Heart left ventricle (tissue), 16 donors: ENCODE measurements at regions of chr17 and their contacts with region 1.

Region 1: DNA sequence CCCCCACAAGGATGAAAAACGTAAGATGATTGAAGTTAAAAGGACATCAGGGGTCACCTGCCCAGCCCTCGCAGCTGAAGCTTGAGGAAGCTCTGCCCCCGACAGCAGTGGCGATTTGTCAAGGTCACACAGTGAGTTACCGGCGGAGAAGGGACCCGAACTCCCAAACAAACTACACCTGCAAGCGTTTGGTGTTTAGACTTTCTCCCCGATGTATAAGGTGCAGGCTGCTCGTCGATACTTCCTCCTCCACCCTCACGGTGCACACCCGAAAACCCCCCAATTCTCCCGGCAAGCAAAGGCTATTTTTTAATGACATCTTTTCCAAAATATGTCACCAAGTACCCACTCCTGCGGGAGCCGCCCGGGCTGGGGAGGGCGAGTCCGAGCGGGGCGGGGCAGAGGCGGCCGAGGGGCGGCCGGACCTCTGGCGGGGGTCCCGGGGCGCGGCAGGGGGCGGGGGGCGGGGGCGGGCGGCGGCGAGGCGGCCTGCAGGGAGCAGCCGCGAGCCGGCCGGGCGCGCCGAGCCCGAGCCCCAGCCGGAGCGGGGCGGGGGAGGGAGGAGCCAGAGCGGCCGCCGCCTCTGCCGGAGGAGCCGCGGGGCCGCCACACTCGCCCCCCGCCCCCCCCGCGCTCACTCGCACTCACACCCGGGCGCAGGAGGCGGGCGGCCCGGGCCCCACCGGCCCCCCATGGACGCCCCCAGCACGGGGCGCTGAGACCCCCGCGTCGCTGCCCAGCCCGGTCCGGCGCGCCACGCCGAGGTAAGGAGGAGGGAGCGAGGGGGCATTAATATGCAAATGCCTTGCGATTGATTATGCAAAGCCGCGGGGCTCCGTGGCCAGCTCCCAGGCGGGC is at the start of gene THRA:
- DNase-seq: peak; percentile 74 to 89 (median 86)
- ATAC-seq: peak; percentile 19 to 82 (median 74)
- H3K4me3 ChIP-seq: peak within 1 kb of the TSS; percentile 78 to 100 (median 96)
- H3K27ac ChIP-seq: peak within 1 kb of the TSS; percentile 95 to 100 (median 98)
- H3K4me1 ChIP-seq: peaks cover 3 to 61% (median 48%) of the 10 kb centered on the region in 12 donors
- H3K27me3 ChIP-seq: no peaks in the 10 kb centered on the region
- CTCF ChIP-seq: peak in 3 of 12 donors; percentile 17 to 30 (median 30)
- POLR2A ChIP-seq: no peak
- total RNA-seq, gene THRA: 63.2 to 105 (median 73.2) TPM

Region 2: GRCh38 chr17:39999067-39999466 is 63.5 kb before region 1 on chr17:
- intact Hi-C with region 1: no loop called
- DNase-seq: no peak
- ATAC-seq: no peak
- H3K4me3 ChIP-seq: no peak overlapping the region
- H3K27ac ChIP-seq: no peak overlapping the region
- H3K4me1 ChIP-seq: peaks cover 0 to 11% (median 0%) of the 10 kb centered on the region in 12 donors
- H3K27me3 ChIP-seq: no peaks in the 10 kb centered on the region
- CTCF ChIP-seq: no peak
- POLR2A ChIP-seq: no peak

Region 3: DNA sequence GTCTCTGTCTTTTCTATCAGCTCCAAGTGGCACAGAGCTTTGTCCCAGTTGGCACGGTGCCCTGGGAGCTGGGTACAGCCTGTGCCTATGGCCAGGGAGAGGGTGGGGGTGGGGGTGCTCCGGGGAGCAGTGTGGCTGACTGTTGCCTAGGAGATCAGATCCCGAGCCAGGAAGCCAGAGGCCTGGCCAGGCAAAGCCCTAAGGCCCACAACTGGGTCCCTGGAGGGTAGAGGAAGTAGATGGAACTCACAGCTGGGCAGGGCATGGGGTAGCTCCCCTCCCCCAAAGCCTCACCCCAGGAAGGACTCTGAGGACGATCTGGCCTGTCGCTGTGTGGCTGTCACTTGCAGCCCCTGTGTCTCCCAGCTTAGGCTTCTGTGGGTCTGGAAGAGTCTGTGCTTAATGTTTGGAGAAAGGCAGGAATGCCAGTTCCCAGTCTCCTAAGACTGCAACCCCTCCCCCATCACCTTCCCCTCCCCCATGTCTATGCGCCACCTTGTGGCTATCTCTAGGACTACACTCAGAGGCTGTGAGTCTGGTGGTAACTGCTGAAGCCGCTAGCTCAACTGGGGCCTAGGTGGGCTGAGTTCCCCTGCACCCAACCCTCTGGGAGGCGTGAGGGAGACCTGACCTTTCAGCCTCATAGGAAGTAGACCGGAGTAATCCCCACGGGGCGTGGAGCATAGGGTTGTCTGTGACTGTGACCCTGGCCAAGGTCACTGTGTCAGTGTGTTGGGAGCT is 12.8 kb after region 1 on chr17:
- intact Hi-C with region 1: loop called in 1 of 10 experiments (anchors 2 kb)
- DNase-seq: peak; percentile 78 to 94 (median 90)
- ATAC-seq: peak; percentile 66 to 72 (median 68)
- H3K4me3 ChIP-seq: peak overlapping the region in 8 of 12 donors; percentile 2 to 27 (median 18)
- H3K27ac ChIP-seq: peak overlapping the region; percentile 62 to 100 (median 95)
- H3K4me1 ChIP-seq: peaks cover 31 to 77% (median 68%) of the 10 kb centered on the region in 12 donors
- H3K27me3 ChIP-seq: no peaks in the 10 kb centered on the region
- CTCF ChIP-seq: peak; percentile 76 to 90 (median 84)
- POLR2A ChIP-seq: no peak

Region 4: DNA sequence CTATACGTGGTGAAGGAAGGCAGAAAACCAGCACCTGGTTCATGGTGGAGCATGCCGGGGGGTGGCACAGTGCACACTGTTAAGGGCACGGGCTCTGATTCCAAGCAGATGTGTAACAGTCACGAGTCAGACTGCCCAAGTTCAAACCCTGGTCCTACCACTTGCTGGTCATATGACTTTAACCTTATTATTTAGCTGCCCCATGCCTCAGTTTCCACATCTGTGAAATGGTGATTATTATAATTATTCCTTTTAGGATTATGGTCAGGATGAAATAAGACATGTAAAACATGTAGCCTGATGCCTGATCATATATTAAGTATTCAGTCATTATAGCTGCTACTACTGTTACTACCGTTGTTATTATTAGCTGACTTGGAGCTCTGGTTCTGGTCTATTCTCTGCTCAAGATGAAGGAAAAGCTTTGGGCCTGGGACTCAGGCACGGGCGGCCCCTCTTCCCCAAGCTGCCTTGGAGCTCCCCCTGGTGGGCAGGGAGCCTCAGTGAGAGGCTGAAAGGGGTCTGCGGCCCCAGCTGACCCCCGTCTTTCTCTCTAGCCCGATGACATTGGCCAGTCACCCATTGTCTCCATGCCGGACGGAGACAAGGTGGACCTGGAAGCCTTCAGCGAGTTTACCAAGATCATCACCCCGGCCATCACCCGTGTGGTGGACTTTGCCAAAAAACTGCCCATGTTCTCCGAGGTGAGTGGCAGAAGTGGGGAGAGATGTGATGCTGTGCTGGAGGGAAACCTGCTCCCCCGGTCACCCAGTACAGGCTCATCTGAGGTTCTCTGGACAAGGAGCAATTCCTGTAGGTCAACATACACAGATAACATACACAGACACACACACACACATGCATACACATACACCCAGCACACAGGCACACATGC is 23.8 kb after region 1 on chr17:
- intact Hi-C with region 1: loop called in 2 of 10 experiments (anchors 2 kb)
- DNase-seq: peak in 4 of 5 donors; percentile 59 to 82 (median 69)
- ATAC-seq: peak in 3 of 4 donors; percentile 7 to 38 (median 35)
- H3K4me3 ChIP-seq: no peak overlapping the region
- H3K27ac ChIP-seq: peak overlapping the region in 4 of 12 donors; percentile 4 to 66 (median 23)
- H3K4me1 ChIP-seq: peaks cover 0 to 31% (median 16%) of the 10 kb centered on the region in 12 donors
- H3K27me3 ChIP-seq: no peaks in the 10 kb centered on the region
- CTCF ChIP-seq: peak; percentile 75 to 91 (median 86)
- POLR2A ChIP-seq: no peak

Region 5: GRCh38 chr17:40098846-40099618 is 36.5 kb after region 1 on chr17:
- intact Hi-C with region 1: loop called in 1 of 10 experiments (anchors 5 kb)
- DNase-seq: peak; percentile 100
- ATAC-seq: peak; percentile 75 to 87 (median 82)
- H3K4me3 ChIP-seq: peak overlapping the region; percentile 72 to 100 (median 84)
- H3K27ac ChIP-seq: peak overlapping the region; percentile 93 to 100 (median 98)
- H3K4me1 ChIP-seq: peaks cover 20 to 93% (median 79%) of the 10 kb centered on the region in 12 donors
- H3K27me3 ChIP-seq: no peaks in the 10 kb centered on the region
- CTCF ChIP-seq: no peak
- POLR2A ChIP-seq: peak; percentile 64 to 89

Region 6: GRCh38 chr17:40224718-40225550 is 162.4 kb after region 1 on chr17:
- intact Hi-C with region 1: no loop called
- DNase-seq: peak in 3 of 5 donors; percentile 27 to 53 (median 28)
- ATAC-seq: peak in 2 of 4 donors; percentile 46 to 59
- H3K4me3 ChIP-seq: no peak overlapping the region
- H3K27ac ChIP-seq: peak overlapping the region in 6 of 12 donors; percentile 21 to 54 (median 41)
- H3K4me1 ChIP-seq: peaks cover 0 to 38% (median 21%) of the 10 kb centered on the region in 12 donors
- H3K27me3 ChIP-seq: no peaks in the 10 kb centered on the region
- CTCF ChIP-seq: no peak
- POLR2A ChIP-seq: no peak